ENCODE measurements at regions of chr19 and their contacts with region 1.

Region 1: GRCh38 chr19:10580979-10581631 is 6.0 kb downstream of the AP1M2 start:
- DNase-seq: peak; percentile 44
- H3K4me3 ChIP-seq: peak overlapping the region; percentile 25; the same call in 1 of the 2 replicates
- CTCF ChIP-seq: peak; percentile 94

Region 2: DNA sequence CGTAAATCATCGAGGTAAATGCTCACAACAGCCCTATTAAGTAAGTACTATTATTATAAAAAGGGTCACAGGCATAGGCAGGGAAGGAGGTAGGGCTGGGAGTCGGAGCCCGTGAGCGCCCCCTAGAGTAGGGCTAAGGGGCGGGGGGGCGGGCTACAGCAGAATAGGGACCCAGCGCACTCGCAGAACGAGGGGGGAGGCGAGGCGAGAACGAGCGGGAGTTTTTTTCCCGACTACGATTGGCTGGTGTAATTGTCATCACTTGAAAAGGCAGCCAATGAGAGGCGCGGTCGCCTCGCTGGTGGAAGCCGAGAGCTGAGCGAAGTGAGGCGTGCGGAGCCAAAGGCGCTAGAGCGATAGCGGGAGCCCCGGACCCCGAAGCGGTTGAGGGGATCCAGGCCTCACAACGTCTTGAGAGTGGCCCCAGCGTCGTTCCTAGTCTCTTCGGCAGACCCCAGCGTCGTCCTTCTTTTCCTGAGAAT is 102.2 kb before region 1 on chr19:
- CTCF ChIA-PET with region 1: interaction called, 14 read pairs
- POLR2A ChIA-PET with region 1: no interaction called
- DNase-seq: no peak
- H3K4me3 ChIP-seq: peak overlapping the region; percentile 47
- CTCF ChIP-seq: peak; percentile 25

Region 3: GRCh38 chr19:10593820-10594637 is 12.9 kb after region 1 on chr19:
- CTCF ChIA-PET with region 1: interaction called, 26 read pairs
- POLR2A ChIA-PET with region 1: no interaction called
- DNase-seq: no peak
- H3K4me3 ChIP-seq: no peak overlapping the region
- CTCF ChIP-seq: no peak

Region 4: DNA sequence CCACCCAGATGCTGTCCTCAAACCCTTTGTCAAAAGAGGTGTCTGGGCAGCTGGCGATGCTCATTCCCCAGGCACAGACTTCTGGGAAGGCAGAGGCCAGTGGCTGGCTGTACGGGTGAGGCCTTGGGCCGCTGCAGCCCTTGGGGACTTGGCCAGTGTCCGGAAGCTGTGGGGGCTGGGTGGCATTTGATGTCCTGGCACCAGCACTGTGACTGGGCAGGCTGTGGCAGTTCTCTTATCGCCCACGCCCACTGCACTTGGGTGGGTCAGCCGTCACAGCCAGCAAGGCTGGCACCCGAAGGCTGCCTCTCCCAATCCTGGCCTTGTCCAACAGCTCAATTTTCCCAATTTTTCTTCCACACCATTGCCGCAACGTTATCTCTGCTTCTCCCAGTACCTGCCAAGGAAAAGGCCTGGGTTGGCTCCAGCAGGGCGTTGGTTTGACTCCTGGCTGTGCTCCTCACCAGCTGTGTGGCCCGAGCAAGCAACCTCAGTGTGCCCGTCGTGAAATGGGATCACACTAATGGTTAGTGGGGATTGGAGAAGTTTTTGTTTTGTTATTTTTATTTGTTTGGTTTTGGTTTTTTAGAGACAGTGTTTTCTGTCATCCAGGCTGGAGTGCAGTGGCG is 31.5 kb after region 1 on chr19:
- CTCF ChIA-PET with region 1: interaction called, 41 read pairs
- POLR2A ChIA-PET with region 1: no interaction called
- DNase-seq: no peak
- H3K4me3 ChIP-seq: no peak overlapping the region
- CTCF ChIP-seq: no peak

Region 5: GRCh38 chr19:10644260-10645007 is 63.3 kb after region 1 on chr19:
- CTCF ChIA-PET with region 1: interaction called, 644 read pairs
- POLR2A ChIA-PET with region 1: no interaction called
- DNase-seq: no peak
- H3K4me3 ChIP-seq: no peak overlapping the region
- CTCF ChIP-seq: peak; percentile 93

Region 6: GRCh38 chr19:10670182-10670581 is 89.1 kb after region 1 on chr19:
- CTCF ChIA-PET with region 1: interaction called, 24 read pairs
- POLR2A ChIA-PET with region 1: no interaction called
- DNase-seq: no peak
- H3K4me3 ChIP-seq: no peak overlapping the region
- CTCF ChIP-seq: no peak

Region 7: DNA sequence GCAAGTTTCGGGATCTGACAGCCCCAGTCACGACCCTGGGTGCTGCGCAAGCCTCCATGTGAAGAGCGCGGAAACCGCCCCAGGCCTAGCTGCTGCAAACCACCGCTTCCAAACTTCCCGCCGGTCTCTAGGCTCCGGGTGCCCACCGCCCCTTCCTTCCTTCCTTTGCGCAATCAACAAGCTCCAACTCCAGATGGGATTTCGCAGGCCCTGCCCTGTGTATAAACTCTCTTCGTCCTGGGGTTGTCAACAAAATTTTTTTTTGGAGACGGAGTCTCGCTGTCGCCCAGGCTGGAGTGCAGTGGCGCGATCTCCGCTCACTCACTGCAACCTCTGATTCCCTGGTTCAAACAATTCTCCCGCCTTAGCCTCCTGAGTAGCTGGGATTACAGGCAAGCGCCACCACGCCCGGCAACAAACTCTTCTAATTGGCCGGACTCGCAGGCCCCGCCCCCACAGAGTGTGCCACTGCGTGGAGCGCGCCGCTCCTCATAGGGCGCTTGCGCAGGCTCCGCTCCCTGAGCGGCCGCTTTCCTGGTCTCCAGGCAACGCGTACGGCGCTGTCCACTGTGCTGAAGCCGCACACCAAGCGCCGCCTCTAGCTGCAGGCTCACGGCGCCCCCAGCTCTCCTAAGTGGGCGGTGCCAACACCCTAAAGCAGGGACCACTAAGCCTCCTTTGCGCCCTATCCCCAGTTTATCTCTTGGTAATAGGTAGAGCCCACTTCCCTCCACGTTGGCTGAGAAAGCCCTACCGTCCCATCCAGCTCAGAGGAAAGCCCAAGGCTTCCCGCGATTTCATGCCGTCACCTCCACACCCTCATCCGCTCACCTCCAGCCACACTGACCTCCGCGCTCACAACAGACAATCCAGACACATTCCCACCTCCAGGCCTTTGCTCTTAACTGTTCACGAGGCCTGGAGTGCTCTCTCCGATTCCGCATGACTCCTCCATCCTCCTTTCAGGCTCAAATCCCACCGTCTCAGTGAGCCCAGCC is 114.6 kb after region 1 on chr19:
- CTCF ChIA-PET with region 1: interaction called, 178 read pairs
- POLR2A ChIA-PET with region 1: no interaction called
- DNase-seq: no peak
- H3K4me3 ChIP-seq: peak overlapping the region; percentile 27
- CTCF ChIP-seq: no peak